Posterior vena cava (tissue), 2 donors: ENCODE measurements at regions of chr11 and their contacts with region 1.

Region 1: GRCh38 chr11:6307876-6308275 is 12.4 kb downstream of the CAVIN3 start:
- DNase-seq: no peak

Region 2: DNA sequence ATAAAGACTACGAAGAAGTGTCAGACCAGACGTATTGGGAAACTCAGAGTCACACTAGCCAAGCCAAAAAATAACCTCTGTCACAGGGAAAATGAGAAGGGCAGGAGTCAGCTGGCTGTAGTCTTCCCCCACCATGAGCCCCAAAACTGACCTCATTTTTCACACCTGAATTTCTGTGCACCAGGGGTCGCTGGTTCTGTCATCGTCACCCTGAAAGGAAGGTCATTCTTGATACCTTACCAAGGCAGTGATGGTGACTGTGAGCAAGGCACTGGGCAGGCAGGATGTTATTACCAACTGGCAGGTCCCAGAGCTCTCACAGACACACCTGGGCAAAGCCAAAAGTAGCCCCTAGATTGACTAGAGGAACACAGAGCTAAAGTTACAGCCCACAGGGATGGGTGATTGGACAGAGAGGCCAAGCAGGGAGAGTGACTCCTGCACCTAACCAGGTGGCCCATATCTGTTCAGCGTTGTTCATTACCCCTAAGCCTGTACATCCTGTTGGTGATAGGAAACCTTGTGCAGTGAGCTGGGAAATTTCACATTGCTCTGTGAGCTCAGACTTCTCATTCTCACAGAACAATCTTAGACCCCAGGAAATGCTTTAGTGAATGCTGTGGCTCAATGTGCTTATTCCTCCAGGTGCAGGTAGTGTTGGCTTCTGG is 245.1 kb before region 1 on chr11:
- intact Hi-C with region 1: loop called in 1 of 2 experiments (anchors 5 kb)
- DNase-seq: no peak

Region 3: DNA sequence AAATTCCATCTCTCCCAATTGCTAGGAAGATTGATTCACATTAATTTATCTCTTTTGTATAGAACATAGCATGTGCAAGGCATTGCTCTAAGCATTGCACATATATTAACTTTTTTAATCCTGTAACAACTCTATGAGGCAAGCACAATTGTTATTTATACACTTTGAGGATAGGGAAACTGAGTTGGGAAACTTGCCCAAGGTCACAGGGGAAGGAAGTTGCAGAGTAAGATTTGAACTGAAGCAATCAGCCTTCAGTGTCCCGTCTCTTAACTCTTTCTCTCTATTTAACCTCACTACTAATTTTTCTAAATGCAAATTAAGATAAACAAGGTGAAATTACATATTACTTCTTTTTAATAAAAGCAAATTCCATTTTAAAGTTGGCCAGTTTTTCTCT is 178.2 kb before region 1 on chr11:
- intact Hi-C with region 1: no loop called
- DNase-seq: no peak